ENCODE measurements at regions of chr19 and their contacts with region 1.

Region 1: GRCh38 chr19:33241530-33242101 is 16.0 kb upstream of the SLC7A10 start:
- DNase-seq: peak; percentile 67
- ATAC-seq: peak; percentile 51

Region 2: GRCh38 chr19:33290956-33291622 is 49.5 kb after region 1 on chr19:
- intact Hi-C with region 1: no loop called
- DNase-seq: no peak
- ATAC-seq: no peak

Region 3: DNA sequence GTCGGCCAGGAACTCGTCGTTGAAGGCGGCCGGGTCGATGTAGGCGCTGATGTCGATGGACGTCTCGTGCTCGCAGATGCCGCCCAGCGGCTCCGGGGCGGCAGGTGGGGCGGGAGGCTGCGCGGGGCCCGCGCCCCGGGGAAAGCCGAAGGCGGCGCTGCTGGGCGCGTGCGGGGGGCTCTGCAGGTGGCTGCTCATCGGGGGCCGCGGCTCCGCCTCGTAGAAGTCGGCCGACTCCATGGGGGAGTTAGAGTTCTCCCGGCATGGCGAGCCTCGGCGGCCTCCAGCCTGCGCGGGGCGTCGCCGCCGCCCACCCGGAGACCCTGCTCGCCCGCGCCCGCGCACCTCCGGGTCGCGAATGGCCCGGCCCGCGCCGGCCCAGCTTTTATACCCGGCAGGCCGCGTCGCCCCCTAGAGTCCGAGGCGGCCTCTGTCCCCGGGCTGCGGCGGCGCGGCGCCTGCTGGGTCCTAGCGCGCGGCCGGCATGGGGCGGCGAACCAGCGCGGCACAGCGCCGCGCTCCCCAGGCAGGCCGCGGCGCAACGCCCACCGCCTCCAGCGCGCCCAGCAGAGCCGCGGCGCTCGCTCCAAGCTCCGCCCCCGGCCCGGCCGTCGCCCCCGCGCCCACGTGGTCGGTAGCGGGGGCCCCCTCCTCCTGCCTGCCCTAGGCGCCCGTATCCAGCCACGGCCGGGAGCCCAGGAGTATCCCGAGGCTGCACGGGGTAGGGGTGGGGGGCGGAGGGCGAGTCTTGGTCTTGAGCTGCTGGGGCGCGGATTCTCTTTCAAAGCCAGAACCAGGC is 60.8 kb after region 1 on chr19 and contains the start of gene CEBPA:
- intact Hi-C with region 1: loop called (anchors 10 kb)
- DNase-seq: peak; percentile 95
- ATAC-seq: peak; percentile 91
- total RNA-seq, gene CEBPA: 4.9 TPM

Measured in Right ventricle myocardium inferior (tissue), 1 donor.